Posterior cingulate gyrus (tissue), 11 donors: ENCODE measurements at regions of chr12 and their contacts with region 1.

Region 1: GRCh38 chr12:8544295-8544694 is 3.6 kb upstream of the CLEC4E start:
- DNase-seq: peak in 9 of 10 donors; percentile 38 to 93 (median 71)

Region 2: DNA sequence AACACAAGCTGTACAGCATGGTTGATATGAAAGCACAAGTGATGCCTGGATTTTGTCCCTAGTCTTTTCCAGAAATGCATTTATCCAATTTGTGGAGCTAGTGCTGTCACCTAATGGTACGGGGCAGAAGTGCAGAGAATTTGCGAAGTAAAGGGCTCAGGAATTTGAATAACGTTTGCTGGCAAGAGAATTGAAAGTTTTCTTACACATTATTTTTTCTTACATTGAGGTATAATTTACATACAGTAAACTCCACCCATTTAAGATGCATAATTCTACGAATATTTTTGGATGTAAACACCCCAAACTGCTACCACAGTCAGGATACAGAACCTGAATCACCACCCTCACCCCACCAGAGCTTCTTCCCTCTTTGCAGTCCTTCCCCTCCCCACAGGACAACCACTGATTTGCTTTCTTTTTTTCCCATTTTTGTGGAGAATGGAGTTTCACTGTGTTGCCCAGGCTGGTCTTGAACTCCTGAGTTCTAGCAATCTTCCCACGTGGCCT is 64.8 kb after region 1 on chr12:
- intact Hi-C with region 1: loop called (anchors 2 kb)
- DNase-seq: peak in 3 of 10 donors; percentile 17 to 18 (median 18)

Region 3: GRCh38 chr12:9049520-9050133 is 505.3 kb after region 1 on chr12:
- intact Hi-C with region 1: loop called (anchors 10 kb)
- DNase-seq: no peak